CD4-positive, alpha-beta memory T cell (primary cell): ENCODE measurements at regions of chr3 and their contacts with region 1.

Region 1: GRCh38 chr3:39346785-39347585 is 17.5 kb downstream of the CCR8 start:
- DNase-seq: no peak
- H3K4me3 ChIP-seq: no peak overlapping the region
- H3K4me3 Mint-ChIP-seq: peak overlapping the region in 4 of 8 donors; percentile 2 to 55 (median 32)
- H3K27ac ChIP-seq: no peak overlapping the region
- H3K27ac Mint-ChIP-seq: peak overlapping the region; percentile 0 to 78 (median 31)
- H3K4me1 ChIP-seq: peaks cover 24% of the 10 kb centered on the region
- H3K4me1 Mint-ChIP-seq: peaks cover 9 to 57% (median 32%) of the 10 kb centered on the region in 4 donors
- H3K27me3 ChIP-seq: no peaks in the 10 kb centered on the region
- H3K27me3 Mint-ChIP-seq: no peaks in the 10 kb centered on the region

Region 2: GRCh38 chr3:39281533-39281932 is 65.5 kb before region 1 on chr3:
- CTCF ChIA-PET with region 1: no interaction called
- POLR2A ChIA-PET with region 1: no interaction called
- intact Hi-C with region 1: no loop called
- DNase-seq: no peak
- H3K4me3 ChIP-seq: no peak overlapping the region
- H3K4me3 Mint-ChIP-seq: peak overlapping the region in 2 of 8 donors; percentile 36 to 73
- H3K27ac ChIP-seq: no peak overlapping the region
- H3K27ac Mint-ChIP-seq: peak overlapping the region in 5 of 7 donors; percentile 54 to 78 (median 70)
- H3K4me1 ChIP-seq: peaks cover 18% of the 10 kb centered on the region
- H3K4me1 Mint-ChIP-seq: peaks cover 19 to 38% (median 26%) of the 10 kb centered on the region in 4 donors
- H3K27me3 ChIP-seq: no peaks in the 10 kb centered on the region
- H3K27me3 Mint-ChIP-seq: no peaks in the 10 kb centered on the region

Region 3: DNA sequence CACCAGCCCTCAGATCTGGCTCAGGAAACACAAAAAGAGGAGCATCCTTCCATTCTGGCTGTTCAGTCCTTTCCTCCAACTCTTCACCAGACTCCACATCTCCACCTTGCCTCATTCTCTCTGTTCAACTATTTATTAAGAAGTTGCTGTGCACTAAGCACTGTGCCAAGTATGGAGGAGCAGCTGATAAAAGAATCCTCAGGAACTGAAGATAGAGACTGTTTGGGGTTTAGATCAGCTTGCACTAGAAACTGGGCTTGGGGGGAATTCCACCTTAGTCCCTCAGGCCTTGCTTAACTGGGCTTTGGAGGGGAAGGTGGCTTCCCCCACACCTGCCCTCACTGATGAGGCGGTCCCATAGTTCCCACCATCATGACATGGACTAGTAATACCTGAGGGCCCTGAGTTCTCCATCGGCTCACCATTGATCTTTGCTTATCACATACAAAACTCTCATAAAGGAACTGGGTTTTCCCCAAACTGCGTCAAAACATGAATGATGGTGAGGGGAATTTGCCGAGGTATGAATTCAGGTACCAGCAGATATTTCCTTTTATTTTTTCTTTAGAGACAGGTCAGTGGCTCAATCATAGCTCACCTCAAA is 19.1 kb before region 1 on chr3:
- CTCF ChIA-PET with region 1: no interaction called
- POLR2A ChIA-PET with region 1: interaction called, 3 read pairs
- intact Hi-C with region 1: loop called (anchors 2 kb)
- DNase-seq: peak; percentile 10 to 79 (median 33)
- H3K4me3 ChIP-seq: no peak overlapping the region
- H3K4me3 Mint-ChIP-seq: peak overlapping the region in 6 of 8 donors; percentile 3 to 54 (median 37)
- H3K27ac ChIP-seq: peak overlapping the region; percentile 62
- H3K27ac Mint-ChIP-seq: peak overlapping the region; percentile 57 to 96 (median 90)
- H3K4me1 ChIP-seq: peaks cover 52% of the 10 kb centered on the region
- H3K4me1 Mint-ChIP-seq: peaks cover 32 to 82% (median 49%) of the 10 kb centered on the region in 4 donors
- H3K27me3 ChIP-seq: no peaks in the 10 kb centered on the region
- H3K27me3 Mint-ChIP-seq: no peaks in the 10 kb centered on the region

Region 4: GRCh38 chr3:39406368-39407258 is 59.6 kb after region 1 on chr3 and contains the start of gene RPSA:
- CTCF ChIA-PET with region 1: no interaction called
- POLR2A ChIA-PET with region 1: no interaction called
- intact Hi-C with region 1: no loop called
- DNase-seq: peak; percentile 91 to 99 (median 99)
- H3K4me3 ChIP-seq: peak within 1 kb of the TSS; percentile 31 to 72
- H3K4me3 Mint-ChIP-seq: peak within 1 kb of the TSS; percentile 88 to 99 (median 96)
- H3K27ac ChIP-seq: peak within 1 kb of the TSS; percentile 81
- H3K27ac Mint-ChIP-seq: peak within 1 kb of the TSS; percentile 88 to 99 (median 98)
- H3K4me1 ChIP-seq: peaks cover 47% of the 10 kb centered on the region
- H3K4me1 Mint-ChIP-seq: peaks cover 30 to 54% (median 43%) of the 10 kb centered on the region in 4 donors
- H3K27me3 ChIP-seq: no peaks in the 10 kb centered on the region
- H3K27me3 Mint-ChIP-seq: no peaks in the 10 kb centered on the region
- total RNA-seq, gene RPSA: 1,582 to 1,688 TPM